Right cardiac atrium (tissue), 5 donors: ENCODE measurements at regions of chr9 and their contacts with region 1.

Region 1: GRCh38 chr9:7536310-7536939 is 263.2 kb downstream of the DMAC1 start:
- DNase-seq: peak; percentile 23 to 57 (median 51)
- ATAC-seq: peak; percentile 47 to 75
- H3K4me3 ChIP-seq: no peak overlapping the region
- H3K27ac ChIP-seq: no peak overlapping the region
- H3K4me1 ChIP-seq: peaks cover 2% of the 10 kb centered on the region
- H3K27me3 ChIP-seq: no peaks in the 10 kb centered on the region

Region 2: DNA sequence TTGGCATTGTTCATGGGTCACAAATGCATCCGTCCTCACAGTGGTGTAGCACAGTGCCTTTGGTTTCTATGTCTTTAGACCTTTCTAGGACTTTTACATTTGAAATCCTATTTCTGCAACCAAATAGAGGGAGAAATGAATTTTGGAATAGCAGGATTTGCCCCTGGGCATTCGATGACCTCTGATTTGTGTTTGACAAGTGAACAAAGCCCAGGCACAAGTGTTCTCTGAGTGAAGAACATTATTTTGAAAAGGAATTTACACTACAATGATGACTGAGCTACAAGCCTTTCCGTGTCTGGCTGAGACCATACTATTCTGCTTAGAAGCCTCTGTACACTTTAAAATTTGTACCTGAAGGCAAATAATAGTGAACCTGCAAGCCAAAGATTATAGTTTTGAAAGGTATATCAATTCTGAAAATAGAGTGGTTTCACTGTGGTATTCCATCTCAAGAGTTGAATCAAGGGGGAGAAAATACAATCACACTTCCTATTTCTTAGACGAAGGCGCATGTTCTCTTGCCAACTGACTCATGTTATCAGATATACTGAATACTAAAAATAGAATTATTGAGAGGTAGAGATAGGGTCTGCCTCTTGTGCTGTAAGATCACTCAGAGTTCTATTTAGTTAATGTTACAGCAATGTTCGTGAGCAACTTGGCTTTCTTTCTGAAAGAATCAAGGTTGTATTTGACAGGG is 481.1 kb before region 1 on chr9:
- intact Hi-C with region 1: loop called in 2 of 4 experiments (anchors 10 kb)
- DNase-seq: no peak
- ATAC-seq: no peak
- H3K4me3 ChIP-seq: no peak overlapping the region
- H3K27ac ChIP-seq: no peak overlapping the region
- H3K4me1 ChIP-seq: no peaks in the 10 kb centered on the region
- H3K27me3 ChIP-seq: no peaks in the 10 kb centered on the region

Region 3: GRCh38 chr9:7405924-7406604 is 130.4 kb before region 1 on chr9:
- intact Hi-C with region 1: loop called in 2 of 4 experiments (anchors 5 to 10 kb)
- DNase-seq: no peak
- ATAC-seq: no peak
- H3K4me3 ChIP-seq: no peak overlapping the region
- H3K27ac ChIP-seq: no peak overlapping the region
- H3K4me1 ChIP-seq: no peaks in the 10 kb centered on the region
- H3K27me3 ChIP-seq: no peaks in the 10 kb centered on the region

Region 4: DNA sequence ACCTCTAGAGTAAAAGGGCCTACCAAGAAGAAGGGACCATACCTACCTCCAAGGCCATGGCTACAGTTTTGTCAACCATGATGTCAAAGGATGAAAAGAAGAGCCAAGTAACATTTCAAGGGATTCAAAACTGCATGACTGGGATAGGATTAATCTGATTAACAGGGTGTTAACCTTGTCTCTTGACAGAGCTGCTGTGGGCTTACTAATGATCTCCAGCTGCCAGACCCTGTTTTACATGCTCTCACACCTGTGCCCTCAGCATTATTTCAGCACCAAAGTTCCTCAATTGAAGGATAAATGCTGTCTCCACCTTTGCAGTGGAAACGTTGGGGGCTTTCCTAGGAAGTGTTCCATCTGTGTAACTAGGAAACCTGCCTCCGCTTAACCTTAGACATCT is 184.9 kb after region 1 on chr9:
- intact Hi-C with region 1: no loop called
- DNase-seq: no peak
- ATAC-seq: no peak
- H3K4me3 ChIP-seq: no peak overlapping the region
- H3K27ac ChIP-seq: no peak overlapping the region
- H3K4me1 ChIP-seq: no peaks in the 10 kb centered on the region
- H3K27me3 ChIP-seq: no peaks in the 10 kb centered on the region